ENCODE measurements at regions of chr15 and their contacts with region 1.

Region 1: DNA sequence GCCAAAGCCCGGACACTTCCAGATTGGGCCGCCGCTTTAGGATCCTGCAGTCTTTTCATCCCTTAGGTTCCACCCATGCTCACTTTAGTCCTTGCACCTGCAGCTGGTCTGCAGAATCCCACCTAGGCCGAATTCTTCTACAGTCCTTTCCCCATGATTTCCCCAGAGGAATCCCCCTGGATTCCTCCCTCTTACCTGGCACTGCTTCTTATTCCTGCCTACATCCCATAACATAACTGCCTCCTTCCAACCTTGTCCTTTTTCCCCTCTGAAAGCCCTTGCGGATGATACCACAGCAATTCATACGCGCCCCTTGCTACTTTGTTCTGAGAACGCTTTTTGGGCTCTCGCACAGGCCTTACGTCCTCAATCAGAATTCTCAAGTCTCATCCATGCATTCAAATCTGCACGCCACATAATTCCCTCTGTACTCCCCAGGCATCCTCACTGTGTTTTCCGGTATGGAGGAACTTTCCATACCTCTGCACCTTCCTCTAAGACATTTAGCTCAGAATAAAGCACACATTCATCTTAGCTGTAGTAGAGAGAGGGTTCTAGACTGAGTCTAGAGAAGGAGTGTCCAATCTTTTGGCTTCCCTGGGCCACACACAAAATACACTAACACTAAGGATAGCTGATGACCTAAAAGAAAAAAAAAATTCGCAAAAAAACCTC is 619 bp downstream of the EIF2AK4 start:
- DNase-seq: peak in 1 of 2 donors; percentile 34
- ATAC-seq: no peak
- H3K4me3 ChIP-seq: peak overlapping the region; percentile 87
- H3K4me3 Mint-ChIP-seq: peak overlapping the region; percentile 86
- H3K27ac ChIP-seq: no peak overlapping the region
- H3K27ac Mint-ChIP-seq: peak overlapping the region; percentile 19 to 92
- H3K4me1 ChIP-seq: peaks cover 16% of the 10 kb centered on the region
- H3K4me1 Mint-ChIP-seq: peaks cover 30 to 34% of the 10 kb centered on the region in 2 donors
- H3K27me3 ChIP-seq: no peaks in the 10 kb centered on the region
- H3K27me3 Mint-ChIP-seq: peaks cover 11 to 25% of the 10 kb centered on the region in 2 donors
- CTCF ChIP-seq: no peak

Region 2: DNA sequence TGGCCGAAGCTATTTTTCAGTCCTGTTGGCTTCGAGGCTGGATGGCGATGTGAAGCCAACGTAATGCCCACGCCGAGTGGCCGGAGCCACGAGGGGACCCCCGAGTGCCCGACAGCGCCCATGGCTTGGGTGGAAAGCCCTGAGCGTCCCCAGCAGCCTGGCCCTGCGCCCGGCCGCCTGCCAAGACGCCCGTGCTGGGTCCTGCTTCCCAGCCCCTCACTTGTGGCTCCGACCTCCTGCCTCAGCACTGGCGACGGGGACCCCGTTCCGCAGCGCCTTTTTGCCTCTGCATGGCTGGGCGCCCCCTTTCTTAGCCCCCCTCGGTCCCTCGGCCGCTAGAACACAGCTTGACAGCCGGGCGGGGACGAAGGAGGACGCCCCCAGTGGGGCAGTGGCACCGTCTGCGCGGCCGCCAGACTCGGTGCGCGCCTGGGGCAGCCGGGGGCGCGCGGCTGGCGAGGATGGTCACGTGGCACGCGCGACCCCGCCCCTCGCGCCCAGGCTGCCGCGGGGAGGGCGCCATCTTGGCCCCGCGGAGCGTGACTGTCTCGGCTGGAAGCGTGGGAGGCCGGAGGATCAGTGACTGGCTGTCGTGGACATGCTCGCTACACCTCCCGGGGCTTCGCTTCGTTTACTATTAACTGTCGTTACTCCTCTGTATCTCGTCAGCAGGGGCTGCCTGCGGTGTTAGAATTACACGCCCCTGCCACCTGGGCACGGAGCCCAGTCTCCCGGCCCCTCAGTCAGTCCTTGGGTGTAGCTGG is 13.8 kb before region 1 on chr15:
- intact Hi-C with region 1: no loop called
- DNase-seq: peak; percentile 78 to 82
- ATAC-seq: peak; percentile 91 to 96 (median 95)
- H3K4me3 ChIP-seq: peak overlapping the region; percentile 59
- H3K4me3 Mint-ChIP-seq: peak overlapping the region; percentile 89
- H3K27ac ChIP-seq: no peak overlapping the region
- H3K27ac Mint-ChIP-seq: peak overlapping the region in 1 of 2 donors; percentile 78
- H3K4me1 ChIP-seq: peaks cover 18% of the 10 kb centered on the region
- H3K4me1 Mint-ChIP-seq: peaks cover 6 to 7% of the 10 kb centered on the region in 2 donors
- H3K27me3 ChIP-seq: peaks cover 38% of the 10 kb centered on the region
- H3K27me3 Mint-ChIP-seq: peaks cover 13 to 23% of the 10 kb centered on the region in 2 donors
- CTCF ChIP-seq: no peak

Region 3: DNA sequence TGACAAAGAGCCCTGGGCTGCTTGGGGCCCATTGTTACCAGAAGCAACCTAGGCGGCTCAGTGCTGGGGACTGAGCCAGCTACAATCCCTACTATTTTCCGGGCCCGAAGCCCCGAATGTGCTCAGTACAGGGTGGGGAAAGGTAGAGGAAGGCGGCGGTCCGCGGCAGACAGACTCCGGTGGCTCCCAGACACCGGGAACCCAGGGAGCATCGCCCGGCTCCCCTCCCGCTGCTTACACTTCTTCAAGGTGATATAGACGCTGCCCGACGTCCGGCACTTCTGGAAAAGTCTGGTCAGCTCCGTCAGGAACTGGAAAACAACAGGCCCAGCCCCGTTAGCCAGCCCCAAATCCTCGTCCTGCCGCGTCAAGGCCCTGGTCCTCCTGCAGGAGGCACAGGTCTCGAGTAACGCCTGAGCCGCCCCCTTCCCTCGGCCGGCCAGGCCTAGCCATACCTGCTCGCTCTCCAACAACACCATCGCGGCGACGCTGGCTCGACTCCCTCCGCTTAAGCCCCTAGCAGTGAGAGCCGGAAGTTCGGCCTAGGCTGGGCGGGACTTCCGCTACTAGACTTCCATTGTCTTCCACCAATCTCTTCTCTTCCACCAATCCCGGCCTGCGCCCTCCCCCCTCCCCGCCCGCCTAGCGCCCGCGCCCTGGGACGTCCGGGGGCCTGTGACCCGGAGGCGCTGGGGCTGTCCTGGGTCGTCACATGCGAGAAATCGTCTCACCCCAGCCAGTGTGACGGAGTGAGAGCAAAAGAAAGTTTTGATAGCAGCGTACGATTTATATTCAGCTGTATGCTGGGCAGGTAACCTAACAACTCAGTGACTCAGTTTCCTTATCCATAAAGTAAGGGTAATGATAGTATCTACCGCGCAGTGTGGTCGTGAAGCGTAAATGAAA is 104.4 kb after region 1 on chr15 and contains the start of gene SRP14:
- intact Hi-C with region 1: loop called (anchors 1 kb)
- DNase-seq: peak; percentile 87 to 96
- ATAC-seq: peak; percentile 94 to 98 (median 96)
- H3K4me3 ChIP-seq: peak within 1 kb of the TSS; percentile 93
- H3K4me3 Mint-ChIP-seq: peak within 1 kb of the TSS; percentile 99
- H3K27ac ChIP-seq: peak within 1 kb of the TSS; percentile 93
- H3K27ac Mint-ChIP-seq: peak within 1 kb of the TSS; percentile 96 to 99
- H3K4me1 ChIP-seq: peaks cover 18% of the 10 kb centered on the region
- H3K4me1 Mint-ChIP-seq: peaks cover 35 to 45% of the 10 kb centered on the region in 2 donors
- H3K27me3 ChIP-seq: no peaks in the 10 kb centered on the region
- H3K27me3 Mint-ChIP-seq: no peaks in the 10 kb centered on the region
- CTCF ChIP-seq: no peak
- total RNA-seq, gene SRP14: 126 to 143 (median 127) TPM